A673 (cell line): ENCODE measurements at regions of chr3 and their contacts with region 1.

Region 1: DNA sequence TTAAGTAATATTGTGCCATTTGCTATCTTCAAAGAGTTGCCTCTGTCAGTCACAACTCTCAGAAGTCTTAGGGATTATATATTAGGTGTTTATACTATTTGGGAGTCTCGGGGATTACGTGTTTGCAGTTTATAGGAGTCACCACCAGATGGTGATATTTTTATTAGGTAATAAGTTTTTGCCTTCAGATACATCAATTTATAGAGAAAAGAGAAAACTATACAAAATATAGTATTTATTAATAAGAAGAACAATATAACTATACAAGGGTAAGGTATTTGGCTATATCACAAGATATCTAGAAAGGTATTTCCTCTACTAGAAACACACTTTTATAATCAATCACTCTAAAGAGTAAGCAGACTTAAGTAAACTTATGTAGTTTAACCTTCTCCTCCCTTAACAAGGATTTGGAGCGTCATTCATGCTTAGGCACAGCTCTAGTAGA is 10.7 kb upstream of the DHX36 start:
- DNase-seq: peak; percentile 60
- H3K4me3 ChIP-seq: no peak overlapping the region
- H3K27ac ChIP-seq: no peak overlapping the region
- H3K4me1 ChIP-seq: no peaks in the 10 kb centered on the region
- H3K27me3 ChIP-seq: peaks cover 8% of the 10 kb centered on the region
- CTCF ChIP-seq: peak; percentile 72

Region 2: DNA sequence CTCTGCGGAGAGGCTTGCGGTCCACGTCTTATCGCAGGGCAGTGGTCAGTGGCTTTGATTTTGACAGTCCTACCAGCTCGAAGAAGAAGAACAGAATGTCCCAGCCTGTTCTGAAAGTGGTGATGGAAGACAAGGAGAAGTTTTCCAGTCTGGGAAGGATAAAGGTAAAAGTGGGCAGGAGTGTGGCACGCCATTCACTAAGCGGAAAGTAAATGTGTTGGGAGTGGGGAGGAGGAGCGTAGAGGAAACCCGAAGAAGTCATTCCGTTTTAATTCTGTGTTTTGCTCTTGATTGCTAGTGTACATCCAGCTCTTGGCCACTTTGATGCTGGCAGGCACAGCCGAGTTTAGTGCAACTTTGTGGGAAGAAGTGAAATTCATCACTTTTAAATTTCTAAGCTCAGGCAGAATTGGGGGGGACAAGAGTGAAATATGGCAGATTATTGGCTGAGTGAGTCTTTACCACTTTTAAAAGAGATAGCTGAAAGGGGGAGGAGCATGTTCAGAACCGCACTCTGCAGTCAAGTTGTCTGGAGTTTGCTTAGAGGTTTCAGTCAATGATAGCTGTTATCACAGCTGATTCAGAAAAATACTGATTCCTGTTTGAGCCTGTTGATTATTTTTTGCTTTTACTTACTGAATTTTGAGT is 212.0 kb before region 1 on chr3:
- CTCF ChIA-PET with region 1: no interaction called
- POLR2A ChIA-PET with region 1: no interaction called
- intact Hi-C with region 1: no loop called
- DNase-seq: peak; percentile 48
- H3K4me3 ChIP-seq: peak overlapping the region; percentile 66
- H3K27ac ChIP-seq: peak overlapping the region; percentile 61
- H3K4me1 ChIP-seq: peaks cover 17% of the 10 kb centered on the region
- H3K27me3 ChIP-seq: no peaks in the 10 kb centered on the region
- CTCF ChIP-seq: no peak

Region 3: DNA sequence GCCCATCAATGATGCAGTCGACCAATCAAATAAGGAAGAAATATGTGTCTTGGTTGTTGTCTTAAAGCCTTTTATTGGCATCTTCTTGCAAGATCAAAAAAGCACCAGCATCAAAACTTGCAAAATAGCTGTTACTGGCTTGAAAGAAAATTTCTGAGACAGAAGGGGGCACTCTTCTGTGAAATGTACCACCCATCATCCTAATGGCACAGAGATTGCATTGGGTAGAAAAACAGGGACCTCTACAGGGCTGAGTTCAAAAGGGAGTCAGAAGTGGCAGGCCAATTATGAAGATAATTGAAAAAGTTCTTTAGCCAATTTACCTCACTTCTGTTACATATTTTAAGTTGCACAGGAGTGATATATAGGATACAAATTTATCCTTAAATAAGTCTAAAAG is 217.3 kb after region 1 on chr3:
- CTCF ChIA-PET with region 1: no interaction called
- POLR2A ChIA-PET with region 1: no interaction called
- intact Hi-C with region 1: loop called (anchors 5 kb)
- DNase-seq: peak; percentile 37
- H3K4me3 ChIP-seq: no peak overlapping the region
- H3K27ac ChIP-seq: no peak overlapping the region
- H3K4me1 ChIP-seq: no peaks in the 10 kb centered on the region
- H3K27me3 ChIP-seq: no peaks in the 10 kb centered on the region
- CTCF ChIP-seq: peak; percentile 42

Region 4: GRCh38 chr3:154730186-154730585 is 395.2 kb after region 1 on chr3:
- CTCF ChIA-PET with region 1: no interaction called
- POLR2A ChIA-PET with region 1: no interaction called
- intact Hi-C with region 1: loop called (anchors 10 kb)
- DNase-seq: no peak
- H3K4me3 ChIP-seq: no peak overlapping the region
- H3K27ac ChIP-seq: no peak overlapping the region
- H3K4me1 ChIP-seq: no peaks in the 10 kb centered on the region
- H3K27me3 ChIP-seq: no peaks in the 10 kb centered on the region
- CTCF ChIP-seq: 0 out of 2 replicates have a peak, but pooled peaks have one; percentile 14

Region 5: DNA sequence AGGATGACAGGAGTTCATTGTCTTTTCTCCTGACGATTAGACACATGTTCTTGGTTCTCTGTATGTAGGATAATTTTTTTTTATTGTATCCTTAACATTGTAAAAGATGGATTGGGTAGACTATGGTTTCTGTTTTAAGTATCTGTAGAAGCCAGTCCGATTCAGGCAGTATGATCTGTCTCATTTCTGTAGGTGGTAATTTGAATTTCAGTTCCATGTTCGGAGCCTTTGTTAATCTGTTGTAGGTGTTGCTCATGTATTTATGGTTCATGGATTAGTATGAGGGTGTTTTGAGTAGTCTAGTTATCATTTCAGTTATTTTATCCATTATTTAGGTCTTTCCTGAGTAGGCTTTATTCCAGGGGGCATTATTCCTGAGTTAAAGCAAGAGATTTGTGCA is 712.7 kb after region 1 on chr3:
- CTCF ChIA-PET with region 1: no interaction called
- POLR2A ChIA-PET with region 1: no interaction called
- intact Hi-C with region 1: no loop called
- DNase-seq: no peak
- H3K4me3 ChIP-seq: no peak overlapping the region
- H3K27ac ChIP-seq: no peak overlapping the region
- H3K4me1 ChIP-seq: no peaks in the 10 kb centered on the region
- H3K27me3 ChIP-seq: no peaks in the 10 kb centered on the region
- CTCF ChIP-seq: no peak